B cell (primary cell): ENCODE measurements at regions of chr2 and their contacts with region 1.

Region 1: GRCh38 chr2:20051532-20052228 is at the start of gene LAPTM4A:
- DNase-seq: peak; percentile 99
- ATAC-seq: peak; percentile 89
- H3K4me3 ChIP-seq: peak within 1 kb of the TSS; percentile 49 to 99 (median 85)
- H3K4me3 Mint-ChIP-seq: no peak within 1 kb of the TSS
- H3K27ac ChIP-seq: peak within 1 kb of the TSS; percentile 88 to 98
- H3K27ac Mint-ChIP-seq: no peak within 1 kb of the TSS
- H3K4me1 ChIP-seq: peaks cover 25 to 28% of the 10 kb centered on the region in 2 donors
- H3K4me1 Mint-ChIP-seq: peaks cover 30% of the 10 kb centered on the region
- H3K27me3 ChIP-seq: peaks cover 0 to 15% (median 7%) of the 10 kb centered on the region in 4 experiments
- H3K27me3 Mint-ChIP-seq: peaks cover 14% of the 10 kb centered on the region
- CTCF ChIP-seq: no peak
- total RNA-seq, gene LAPTM4A: 70.1 and 74.4 TPM in 2 replicates

Region 2: DNA sequence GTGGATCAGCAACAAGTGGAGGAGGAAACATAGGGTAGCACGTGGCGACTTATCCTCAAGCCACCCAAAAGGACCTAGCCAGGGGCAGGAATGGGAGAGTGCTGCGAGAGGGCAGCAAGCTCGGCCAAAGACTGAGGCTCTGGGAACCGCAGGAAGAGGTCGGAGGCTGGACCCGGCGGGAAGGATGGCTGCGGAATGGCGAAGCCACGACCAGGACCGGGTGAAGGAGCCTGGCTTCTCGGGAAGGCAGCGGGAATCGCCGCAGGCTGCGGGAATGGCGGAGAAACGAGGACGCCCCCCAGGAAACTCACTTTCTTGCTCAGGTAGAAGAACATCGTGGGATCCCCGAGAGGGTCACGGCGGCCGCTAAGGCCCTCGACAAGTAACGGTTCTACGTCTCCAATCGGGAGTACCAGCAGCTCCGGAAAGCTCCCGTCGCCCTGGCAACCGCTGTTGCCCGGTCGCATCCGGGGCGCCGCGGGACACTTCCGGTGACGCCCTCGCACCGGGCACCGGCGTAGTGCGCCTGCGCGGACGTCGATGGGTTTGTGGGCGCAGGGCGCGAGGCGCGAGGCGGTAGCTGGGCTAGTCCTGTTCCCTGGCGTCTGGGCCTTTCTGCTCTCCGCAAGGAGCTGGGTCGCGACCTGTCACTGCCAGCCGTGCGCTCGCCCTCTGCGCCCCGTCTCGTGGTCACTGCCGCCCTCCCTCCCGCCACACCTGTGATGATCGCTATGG is 61.8 kb before region 1 on chr2 and contains the start of gene WDR35:
- CTCF ChIA-PET with region 1: interaction called, 3 read pairs
- POLR2A ChIA-PET with region 1: no interaction called
- intact Hi-C with region 1: loop called (anchors 1 kb)
- DNase-seq: peak; percentile 92
- ATAC-seq: peak; percentile 88
- H3K4me3 ChIP-seq: peak within 1 kb of the TSS; percentile 68 to 93 (median 88)
- H3K4me3 Mint-ChIP-seq: peak within 1 kb of the TSS; percentile 91
- H3K27ac ChIP-seq: peak within 1 kb of the TSS; percentile 69 to 77
- H3K27ac Mint-ChIP-seq: peak within 1 kb of the TSS; percentile 89
- H3K4me1 ChIP-seq: peaks cover 16 to 22% of the 10 kb centered on the region in 2 donors
- H3K4me1 Mint-ChIP-seq: peaks cover 28% of the 10 kb centered on the region
- H3K27me3 ChIP-seq: peaks cover 0 to 7% (median 2%) of the 10 kb centered on the region in 4 experiments
- H3K27me3 Mint-ChIP-seq: peaks cover 21% of the 10 kb centered on the region
- CTCF ChIP-seq: no peak
- total RNA-seq, gene WDR35: 9.4 and 11.8 TPM in 2 replicates

Region 3: DNA sequence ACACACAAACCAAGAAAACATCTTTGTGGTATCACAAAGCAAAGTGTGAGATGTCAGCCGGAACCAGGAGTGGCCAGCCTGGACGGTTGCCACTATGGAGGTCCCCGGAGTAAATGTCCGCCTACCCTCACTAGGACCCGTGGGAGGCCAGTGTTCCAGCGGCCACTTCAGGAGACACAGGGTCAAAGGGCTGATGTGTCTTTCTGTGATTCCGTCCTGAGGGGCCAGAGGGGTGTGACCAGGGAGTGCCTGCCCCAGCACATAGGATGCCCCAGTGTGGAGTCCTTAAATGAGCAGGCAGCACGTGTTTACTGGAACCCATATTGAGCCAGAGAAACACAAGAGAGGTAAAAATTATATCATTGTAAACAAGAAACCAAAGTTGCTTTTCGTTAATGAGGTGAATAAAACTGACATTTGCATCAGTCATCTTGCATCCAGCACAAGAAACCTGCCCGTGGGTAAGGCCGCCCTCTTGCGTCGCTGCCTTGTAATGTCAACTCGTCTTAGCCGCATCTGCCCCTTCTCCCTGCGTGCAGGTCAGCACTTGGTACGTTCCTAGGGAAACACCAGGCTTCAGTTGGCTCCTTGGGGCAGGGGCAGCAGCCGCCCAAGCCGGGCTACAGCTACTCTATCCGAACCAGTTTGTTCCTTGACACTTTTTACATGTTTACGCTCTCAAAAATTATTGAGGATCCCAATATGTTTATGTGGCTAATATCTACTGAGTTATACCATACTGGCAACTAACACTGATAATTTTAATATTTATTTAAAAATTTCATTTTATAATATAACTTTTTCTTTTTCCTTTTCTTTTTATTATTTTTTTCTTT is 46.4 kb after region 1 on chr2:
- CTCF ChIA-PET with region 1: no interaction called
- POLR2A ChIA-PET with region 1: no interaction called
- intact Hi-C with region 1: no loop called
- DNase-seq: peak; percentile 83
- ATAC-seq: peak; percentile 94
- H3K4me3 ChIP-seq: no peak overlapping the region
- H3K4me3 Mint-ChIP-seq: no peak overlapping the region
- H3K27ac ChIP-seq: no peak overlapping the region
- H3K27ac Mint-ChIP-seq: no peak overlapping the region
- H3K4me1 ChIP-seq: no peaks in the 10 kb centered on the region
- H3K4me1 Mint-ChIP-seq: peaks cover 1% of the 10 kb centered on the region
- H3K27me3 ChIP-seq: peaks cover 0 to 3% (median 0%) of the 10 kb centered on the region in 4 experiments
- H3K27me3 Mint-ChIP-seq: peaks cover 34% of the 10 kb centered on the region
- CTCF ChIP-seq: peak; percentile 95

Region 4: GRCh38 chr2:20350753-20351554 is 299.3 kb after region 1 on chr2 and contains the start of gene PUM2:
- CTCF ChIA-PET with region 1: no interaction called
- POLR2A ChIA-PET with region 1: interaction called, 4 read pairs
- intact Hi-C with region 1: loop called (anchors 1 kb)
- DNase-seq: peak; percentile 99
- ATAC-seq: peak; percentile 85
- H3K4me3 ChIP-seq: peak within 1 kb of the TSS; percentile 76 to 95 (median 86)
- H3K4me3 Mint-ChIP-seq: no peak within 1 kb of the TSS
- H3K27ac ChIP-seq: peak within 1 kb of the TSS; percentile 89 to 94
- H3K27ac Mint-ChIP-seq: no peak within 1 kb of the TSS
- H3K4me1 ChIP-seq: peaks cover 32 to 39% of the 10 kb centered on the region in 2 donors
- H3K4me1 Mint-ChIP-seq: peaks cover 34% of the 10 kb centered on the region
- H3K27me3 ChIP-seq: no peaks in the 10 kb centered on the region
- H3K27me3 Mint-ChIP-seq: no peaks in the 10 kb centered on the region
- CTCF ChIP-seq: peak; percentile 17
- total RNA-seq, gene PUM2: 151 and 163 TPM in 2 replicates